ENCODE measurements at regions of chr9 and their contacts with region 1.

Region 1: DNA sequence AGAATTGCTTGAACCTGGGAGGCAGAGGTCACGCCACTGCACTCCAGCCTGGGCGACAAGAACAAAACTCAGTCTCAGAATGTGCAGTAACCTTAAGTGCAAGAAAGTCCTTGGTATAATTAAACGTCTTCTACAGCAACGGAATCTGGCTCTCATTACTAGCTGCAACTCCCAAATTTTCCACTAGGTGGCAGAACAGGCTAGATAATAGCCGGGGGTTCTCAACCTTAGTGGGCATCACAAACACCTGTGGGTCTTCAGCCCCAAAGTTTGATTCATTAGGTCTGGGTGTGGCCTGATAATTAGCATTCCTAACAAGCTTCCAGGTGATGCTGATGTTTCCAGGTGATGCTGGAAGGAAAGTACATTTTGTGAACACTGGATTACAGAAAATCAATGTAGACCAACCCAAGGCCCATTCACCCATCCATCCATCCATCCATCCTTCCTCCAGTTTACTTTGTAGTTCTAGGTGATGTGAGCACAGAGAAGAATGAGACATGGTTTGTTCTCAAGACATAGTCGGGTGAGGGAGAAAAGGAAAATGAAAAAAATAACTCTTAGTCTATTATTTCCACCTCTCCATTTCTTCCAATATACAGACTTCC is 37.3 kb downstream of the FBXW2 start:
- DNase-seq: peak; percentile 90
- H3K27ac ChIP-seq: 0 out of 2 replicates have a peak overlapping the region, but pooled peaks have one; percentile 26
- CTCF ChIP-seq: peak; percentile 96

Region 2: GRCh38 chr9:120792898-120793765 is 37.2 kb after region 1 on chr9 and contains the start of gene FBXW2:
- CTCF ChIA-PET with region 1: interaction called, 10 read pairs
- POLR2A ChIA-PET with region 1: no interaction called
- DNase-seq: peak; percentile 97
- H3K27ac ChIP-seq: peak within 1 kb of the TSS; percentile 86
- CTCF ChIP-seq: no peak

Region 3: DNA sequence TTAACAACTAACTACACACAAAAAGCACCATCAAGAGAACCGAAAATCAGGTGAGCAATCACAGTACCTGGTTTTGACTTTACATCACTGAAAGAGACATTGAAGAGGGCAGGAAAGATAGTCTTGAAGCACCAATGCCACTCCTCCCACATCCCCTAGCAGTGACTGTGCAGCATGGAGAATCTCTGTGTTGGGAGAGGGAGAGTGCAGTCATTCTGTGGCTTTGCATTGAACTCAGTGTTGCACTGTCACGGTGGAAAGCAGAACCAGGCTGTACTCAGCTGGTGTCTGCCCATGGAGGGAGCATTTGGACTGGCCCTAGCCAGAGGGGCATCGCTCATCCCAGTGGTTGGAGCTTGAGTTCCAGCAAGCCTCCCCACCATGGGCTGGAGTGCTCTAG is 253.7 kb after region 1 on chr9:
- CTCF ChIA-PET with region 1: no interaction called
- POLR2A ChIA-PET with region 1: no interaction called
- DNase-seq: no peak
- H3K27ac ChIP-seq: no peak overlapping the region
- CTCF ChIP-seq: no peak